Upper lobe of right lung (tissue), 1 donor: ENCODE measurements at regions of chr10 and their contacts with region 1.

Region 1: DNA sequence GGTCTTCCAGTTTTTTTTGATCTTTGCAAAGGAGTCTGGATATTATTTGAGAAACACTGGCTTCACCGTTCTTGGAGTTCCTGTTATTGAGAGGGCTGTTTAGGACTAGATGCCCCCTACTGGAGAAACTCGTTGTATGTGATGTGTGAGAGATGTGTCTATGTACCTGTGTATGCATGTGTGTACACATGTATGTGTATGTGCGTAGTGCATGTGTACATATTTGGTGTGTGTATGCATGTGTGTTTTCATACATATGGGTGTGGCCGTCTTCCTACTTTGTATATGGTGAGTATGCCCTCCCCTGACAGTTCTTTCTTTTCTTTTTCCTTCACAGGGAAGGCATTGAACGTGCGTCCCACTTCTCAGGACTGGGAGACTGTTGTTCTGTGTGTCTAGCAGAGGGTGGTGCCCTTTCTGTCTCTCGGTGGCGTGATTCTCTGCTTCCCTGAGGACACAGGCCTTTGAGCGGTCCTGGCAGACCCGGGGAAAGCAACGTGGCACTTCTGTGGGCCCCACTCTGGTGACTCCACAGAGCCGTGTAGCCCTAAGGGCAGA is 3.0 kb upstream of the CALHM3 start:
- DNase-seq: no peak
- ATAC-seq: peak; percentile 80
- H3K4me3 ChIP-seq: no peak overlapping the region
- H3K27ac ChIP-seq: no peak overlapping the region
- H3K4me1 ChIP-seq: no peaks in the 10 kb centered on the region
- H3K27me3 ChIP-seq: no peaks in the 10 kb centered on the region
- CTCF ChIP-seq: peak; percentile 72

Region 2: DNA sequence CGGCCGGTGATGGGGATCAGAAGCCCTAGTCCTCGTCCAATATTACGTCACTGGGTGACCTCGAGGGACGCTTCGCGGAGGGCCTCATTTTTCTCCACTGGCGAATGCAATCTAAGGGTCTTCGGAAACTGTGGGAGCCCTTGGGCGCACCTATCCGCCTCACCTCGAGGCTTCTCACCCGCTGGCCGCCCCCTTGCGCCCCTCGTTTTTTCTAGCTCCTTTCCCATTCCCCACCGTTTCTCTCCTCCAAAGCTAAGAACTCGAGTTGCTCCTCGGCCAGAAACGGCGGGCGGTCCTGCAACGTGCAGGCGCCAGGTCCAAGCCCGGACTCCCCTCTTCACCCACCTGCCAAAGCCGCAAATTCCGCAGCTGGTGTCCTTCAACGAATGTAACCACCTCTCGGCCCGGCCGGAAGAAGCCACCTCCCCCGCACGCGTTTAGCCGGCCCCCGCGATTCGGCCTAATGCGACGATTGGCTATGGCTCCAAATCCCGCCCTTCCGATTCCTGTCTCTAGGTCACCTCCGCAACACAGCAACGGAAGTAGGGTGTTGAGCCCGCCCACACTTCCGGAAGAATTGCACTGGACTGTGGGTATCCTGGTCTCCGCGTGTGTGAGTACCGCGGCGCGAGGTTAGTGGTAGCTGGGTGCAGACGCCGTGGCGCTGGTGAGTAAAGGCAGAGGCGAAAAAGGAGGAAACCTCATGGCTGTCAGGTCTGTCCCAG is 85.8 kb before region 1 on chr10 and contains the starts of genes ATP5MK and PDCD11:
- intact Hi-C with region 1: no loop called
- DNase-seq: peak; percentile 98
- ATAC-seq: peak; percentile 100
- H3K4me3 ChIP-seq: peak within 1 kb of the TSS; percentile 76
- H3K27ac ChIP-seq: peak within 1 kb of the TSS; percentile 85
- H3K4me1 ChIP-seq: peaks cover 21% of the 10 kb centered on the region
- H3K27me3 ChIP-seq: no peaks in the 10 kb centered on the region
- CTCF ChIP-seq: peak; percentile 20
- total RNA-seq, gene ATP5MK: 206 TPM
- total RNA-seq, gene PDCD11: 25.1 TPM

Region 3: GRCh38 chr10:103416436-103417147 is 65.5 kb before region 1 on chr10:
- intact Hi-C with region 1: loop called (anchors 2 kb)
- DNase-seq: no peak
- ATAC-seq: peak; percentile 52
- H3K4me3 ChIP-seq: no peak overlapping the region
- H3K27ac ChIP-seq: no peak overlapping the region
- H3K4me1 ChIP-seq: no peaks in the 10 kb centered on the region
- H3K27me3 ChIP-seq: no peaks in the 10 kb centered on the region
- CTCF ChIP-seq: peak; percentile 66